HepG2 (cell line): ENCODE measurements at regions of chr6 and their contacts with region 1.

Region 1: DNA sequence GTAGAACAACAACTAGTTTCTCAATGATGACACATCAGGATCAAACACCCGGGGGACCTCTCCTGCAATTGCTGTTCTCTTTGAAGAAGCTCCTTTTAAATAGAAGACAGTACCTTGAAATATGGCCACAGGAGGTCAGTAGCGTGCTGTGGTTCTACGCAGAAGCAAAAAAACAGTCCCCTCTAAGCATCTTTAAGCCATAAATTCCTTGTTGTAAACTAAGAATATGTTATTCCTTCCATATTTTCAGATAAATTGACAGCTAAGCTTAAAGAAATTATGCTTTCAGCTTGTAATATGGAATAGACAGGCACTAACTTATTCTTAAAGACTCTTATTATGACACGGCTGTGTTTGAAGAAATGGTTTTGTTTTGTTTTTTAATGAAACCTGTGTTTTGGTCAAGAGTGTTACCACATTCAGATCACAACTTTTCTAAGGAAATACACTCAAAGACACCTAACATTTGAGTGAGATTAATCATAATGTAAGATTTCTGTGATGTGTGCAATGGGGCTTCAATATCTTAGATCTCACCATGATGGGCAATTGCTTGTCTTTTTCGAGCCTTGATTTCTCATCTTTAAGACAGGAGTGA is 49.7 kb upstream of the IL20RA start:
- DNase-seq: peak; percentile 74
- ATAC-seq: peak; percentile 87
- H3K4me3 ChIP-seq: no peak overlapping the region
- H3K27ac ChIP-seq: no peak overlapping the region
- H3K4me1 ChIP-seq: peaks cover 8% of the 10 kb centered on the region; the same call in 1 of the 2 replicates
- H3K27me3 ChIP-seq: peaks cover 0 to 5% of the 10 kb centered on the region in 2 experiments; a peak in 1 of 5 replicates
- CTCF ChIP-seq: peak; percentile 85
- EP300 ChIP-seq: no peak; a peak in 1 of 4 replicates
- POLR2A ChIP-seq: no peak
- RAD21 ChIP-seq: peak; percentile 83

Region 2: DNA sequence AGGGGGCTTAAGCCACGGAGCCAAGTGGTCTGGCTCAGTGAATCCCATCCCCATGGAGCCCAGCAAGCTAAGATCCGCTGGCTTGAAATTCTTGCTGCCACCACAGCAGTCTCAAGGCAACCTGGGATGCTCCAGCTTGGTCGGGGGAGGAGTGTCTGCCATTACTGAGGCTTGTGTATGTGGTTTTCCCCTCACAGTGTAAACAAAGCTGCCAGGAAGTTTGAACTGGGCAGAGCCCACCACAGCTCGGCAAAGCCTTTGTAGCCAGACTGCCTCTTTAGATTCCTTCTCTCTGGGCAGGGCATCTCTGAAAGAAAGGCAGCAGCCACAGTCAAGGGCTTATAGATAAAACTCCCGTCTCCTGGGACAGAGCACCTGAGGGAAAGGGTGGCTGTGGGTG is 24.2 kb before region 1 on chr6:
- CTCF ChIA-PET with region 1: no interaction called
- POLR2A ChIA-PET with region 1: no interaction called
- in situ Hi-C with region 1: no loop called
- intact Hi-C with region 1: no loop called
- DNase-seq: no peak
- ATAC-seq: no peak
- H3K4me3 ChIP-seq: no peak overlapping the region
- H3K27ac ChIP-seq: no peak overlapping the region
- H3K4me1 ChIP-seq: no peaks in the 10 kb centered on the region
- H3K27me3 ChIP-seq: peaks cover 2 to 29% of the 10 kb centered on the region in 2 experiments; a peak in 3 of 5 replicates
- CTCF ChIP-seq: no peak
- EP300 ChIP-seq: no peak
- POLR2A ChIP-seq: no peak
- RAD21 ChIP-seq: no peak

Region 3: GRCh38 chr6:137165375-137166246 is 71.1 kb after region 1 on chr6:
- CTCF ChIA-PET with region 1: interaction called, 13 read pairs
- POLR2A ChIA-PET with region 1: no interaction called
- in situ Hi-C with region 1: no loop called
- intact Hi-C with region 1: loop called (anchors 1 kb)
- DNase-seq: peak; percentile 35
- ATAC-seq: peak; percentile 83
- H3K4me3 ChIP-seq: no peak overlapping the region
- H3K27ac ChIP-seq: no peak overlapping the region
- H3K4me1 ChIP-seq: no peaks in the 10 kb centered on the region
- H3K27me3 ChIP-seq: peaks cover 0 to 26% of the 10 kb centered on the region in 2 experiments; a peak in 4 of 5 replicates
- CTCF ChIP-seq: peak; percentile 67
- EP300 ChIP-seq: no peak
- POLR2A ChIP-seq: no peak
- RAD21 ChIP-seq: peak; percentile 51

Region 4: DNA sequence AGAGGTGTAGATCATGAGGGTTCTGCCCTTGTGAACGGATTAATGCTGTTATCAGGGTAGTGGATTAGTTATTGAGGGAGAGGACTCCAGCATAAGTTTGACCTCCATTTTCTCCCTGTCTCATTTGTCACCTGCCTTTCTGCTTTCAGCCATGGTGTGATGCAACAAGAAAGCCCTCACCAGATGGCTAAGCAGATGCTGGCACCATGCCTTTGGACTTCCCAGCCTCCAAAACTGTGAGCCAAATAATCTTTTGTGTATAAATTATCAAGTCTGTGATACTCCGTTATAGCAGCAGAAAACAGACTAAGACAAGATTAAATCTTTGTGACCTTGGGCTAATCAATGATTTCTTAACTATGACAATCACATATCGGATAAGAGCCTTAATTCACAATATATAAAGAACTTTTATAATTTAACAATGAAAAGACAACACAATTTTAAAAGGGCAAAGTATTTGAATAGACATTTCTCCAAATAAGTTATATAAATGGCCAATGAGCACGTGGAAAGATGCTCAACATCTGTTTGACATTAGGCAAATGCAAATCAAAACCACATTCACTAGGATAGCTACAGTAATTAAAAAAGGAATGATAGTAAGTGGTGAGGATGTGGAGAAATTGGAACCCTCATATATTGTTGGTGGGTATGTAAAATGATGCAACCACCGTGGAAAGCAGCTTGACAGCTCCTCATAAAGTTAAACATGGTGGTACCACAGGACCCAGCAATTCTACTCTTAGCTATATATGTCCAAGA is 170.0 kb after region 1 on chr6:
- CTCF ChIA-PET with region 1: no interaction called
- POLR2A ChIA-PET with region 1: no interaction called
- in situ Hi-C with region 1: loop called (anchors 5 kb)
- intact Hi-C with region 1: no loop called
- DNase-seq: no peak
- ATAC-seq: no peak
- H3K4me3 ChIP-seq: no peak overlapping the region
- H3K27ac ChIP-seq: no peak overlapping the region
- H3K4me1 ChIP-seq: peaks cover 22% of the 10 kb centered on the region
- H3K27me3 ChIP-seq: no peaks in the 10 kb centered on the region
- CTCF ChIP-seq: no peak
- EP300 ChIP-seq: no peak
- POLR2A ChIP-seq: no peak
- RAD21 ChIP-seq: no peak

Region 5: GRCh38 chr6:137589067-137589848 is 494.7 kb after region 1 on chr6:
- CTCF ChIA-PET with region 1: interaction called, 4 read pairs
- POLR2A ChIA-PET with region 1: no interaction called
- in situ Hi-C with region 1: no loop called
- intact Hi-C with region 1: loop called (anchors 1 kb)
- DNase-seq: peak; percentile 92
- ATAC-seq: peak; percentile 100
- H3K4me3 ChIP-seq: no peak overlapping the region; a peak in 1 of 6 replicates
- H3K27ac ChIP-seq: no peak overlapping the region
- H3K4me1 ChIP-seq: peaks cover 16% of the 10 kb centered on the region
- H3K27me3 ChIP-seq: no peaks in the 10 kb centered on the region
- CTCF ChIP-seq: peak; percentile 91
- EP300 ChIP-seq: peak in 1 of 2 experiments; percentile 36; a peak in 2 of 4 replicates
- POLR2A ChIP-seq: no peak
- RAD21 ChIP-seq: peak; percentile 84